Activated CD8-positive, alpha-beta T cell treated with anti-CD3 and anti-CD28 coated beads for 36 hours (primary cell): ENCODE measurements at regions of chr1 and their contacts with region 1.

Region 1: GRCh38 chr1:12124693-12125421 is 41.9 kb upstream of the TNFRSF1B start:
- DNase-seq: peak; percentile 85
- ATAC-seq: peak; percentile 49
- H3K4me3 Mint-ChIP-seq: no peak overlapping the region
- H3K27ac Mint-ChIP-seq: peak overlapping the region; percentile 73
- H3K4me1 Mint-ChIP-seq: peaks cover 60% of the 10 kb centered on the region
- H3K27me3 Mint-ChIP-seq: peaks cover 8% of the 10 kb centered on the region
- CTCF ChIP-seq: peak; percentile 99

Region 2: GRCh38 chr1:11934302-11935056 is 190.4 kb before region 1 on chr1 and contains the start of gene PLOD1:
- CTCF ChIA-PET with region 1: no interaction called
- POLR2A ChIA-PET with region 1: no interaction called
- intact Hi-C with region 1: no loop called
- DNase-seq: peak; percentile 88
- ATAC-seq: peak; percentile 98
- H3K4me3 Mint-ChIP-seq: peak within 1 kb of the TSS; percentile 80
- H3K27ac Mint-ChIP-seq: peak within 1 kb of the TSS; percentile 75
- H3K4me1 Mint-ChIP-seq: peaks cover 2% of the 10 kb centered on the region
- H3K27me3 Mint-ChIP-seq: no peaks in the 10 kb centered on the region
- CTCF ChIP-seq: no peak
- total RNA-seq, gene PLOD1: 21.5 to 22.0 TPM

Region 3: DNA sequence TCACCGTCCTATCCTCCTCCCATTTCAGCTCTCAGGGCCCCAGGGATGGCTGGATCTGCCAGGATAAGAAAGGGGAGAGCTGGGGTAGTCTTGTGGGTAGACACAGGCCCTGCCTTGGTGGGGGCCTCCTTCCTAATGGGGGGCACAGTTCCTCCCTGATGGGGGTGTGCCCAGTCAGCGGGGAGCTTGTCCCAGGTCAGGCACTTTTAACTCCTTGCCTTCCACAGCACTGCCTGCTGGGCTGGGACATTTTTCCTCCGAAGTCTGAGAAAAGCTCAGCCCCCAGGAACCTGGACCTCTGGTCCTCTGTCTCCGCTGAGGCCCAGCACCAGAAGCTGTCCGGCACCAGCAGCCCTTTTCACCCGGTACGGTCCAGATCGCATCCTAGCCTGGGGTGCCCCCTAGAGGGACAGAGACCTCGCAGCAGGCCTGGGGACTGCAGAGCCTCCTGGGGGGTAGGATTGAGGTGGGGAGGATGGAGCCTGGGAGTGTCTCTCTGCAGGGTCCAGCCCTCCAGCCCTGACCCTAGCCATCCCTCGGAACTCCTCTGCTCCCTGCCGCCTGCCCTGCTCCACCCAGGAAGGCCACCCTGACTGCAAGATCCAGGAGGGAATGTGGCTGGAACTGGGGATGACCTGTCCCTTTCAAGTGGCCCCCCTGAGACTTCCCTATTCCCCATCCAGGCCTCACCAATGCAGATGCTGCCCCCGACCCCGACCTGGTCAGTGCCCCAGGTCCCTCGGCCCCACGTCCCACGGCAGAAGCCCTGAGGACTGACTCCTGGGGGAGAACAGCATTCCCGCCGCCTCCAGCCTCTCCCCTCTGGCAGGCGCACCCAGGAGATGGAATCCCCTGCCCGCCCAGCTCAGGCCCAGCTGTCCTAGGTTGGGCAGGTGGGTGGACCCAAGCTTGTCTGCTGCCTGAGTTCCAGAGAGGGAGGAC is 93.5 kb before region 1 on chr1:
- CTCF ChIA-PET with region 1: no interaction called
- POLR2A ChIA-PET with region 1: no interaction called
- intact Hi-C with region 1: no loop called
- DNase-seq: peak; percentile 67
- ATAC-seq: peak; percentile 96
- H3K4me3 Mint-ChIP-seq: no peak overlapping the region
- H3K27ac Mint-ChIP-seq: no peak overlapping the region
- H3K4me1 Mint-ChIP-seq: no peaks in the 10 kb centered on the region
- H3K27me3 Mint-ChIP-seq: no peaks in the 10 kb centered on the region
- CTCF ChIP-seq: peak; percentile 69

Region 4: GRCh38 chr1:12087797-12088314 is 37.0 kb before region 1 on chr1:
- CTCF ChIA-PET with region 1: interaction called, 12 read pairs
- POLR2A ChIA-PET with region 1: no interaction called
- intact Hi-C with region 1: no loop called
- DNase-seq: peak; percentile 88
- ATAC-seq: peak; percentile 78
- H3K4me3 Mint-ChIP-seq: peak overlapping the region; percentile 25
- H3K27ac Mint-ChIP-seq: peak overlapping the region; percentile 90
- H3K4me1 Mint-ChIP-seq: peaks cover 37% of the 10 kb centered on the region
- H3K27me3 Mint-ChIP-seq: no peaks in the 10 kb centered on the region
- CTCF ChIP-seq: no peak

Region 5: DNA sequence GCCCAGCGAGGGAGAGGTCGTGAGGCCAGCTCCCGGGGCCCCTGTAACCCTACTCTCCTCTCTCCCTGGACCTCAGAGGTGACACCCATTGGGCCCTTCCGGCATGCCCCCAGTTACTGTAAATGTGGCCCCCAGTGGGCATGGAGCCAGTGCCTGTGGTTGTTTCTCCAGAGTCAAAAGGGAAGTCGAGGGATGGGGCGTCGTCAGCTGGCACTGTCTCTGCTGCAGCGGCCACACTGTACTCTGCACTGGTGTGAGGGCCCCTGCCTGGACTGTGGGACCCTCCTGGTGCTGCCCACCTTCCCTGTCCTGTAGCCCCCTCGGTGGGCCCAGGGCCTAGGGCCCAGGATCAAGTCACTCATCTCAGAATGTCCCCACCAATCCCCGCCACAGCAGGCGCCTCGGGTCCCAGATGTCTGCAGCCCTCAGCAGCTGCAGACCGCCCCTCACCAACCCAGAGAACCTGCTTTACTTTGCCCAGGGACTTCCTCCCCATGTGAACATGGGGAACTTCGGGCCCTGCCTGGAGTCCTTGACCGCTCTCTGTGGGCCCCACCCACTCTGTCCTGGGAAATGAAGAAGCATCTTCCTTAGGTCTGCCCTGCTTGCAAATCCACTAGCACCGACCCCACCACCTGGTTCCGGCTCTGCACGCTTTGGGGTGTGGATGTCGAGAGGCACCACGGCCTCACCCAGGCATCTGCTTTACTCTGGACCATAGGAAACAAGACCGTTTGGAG is 18.2 kb after region 1 on chr1:
- CTCF ChIA-PET with region 1: interaction called, 38 read pairs
- POLR2A ChIA-PET with region 1: interaction called, 4 read pairs
- intact Hi-C with region 1: no loop called
- DNase-seq: no peak
- ATAC-seq: no peak
- H3K4me3 Mint-ChIP-seq: no peak overlapping the region
- H3K27ac Mint-ChIP-seq: peak overlapping the region; percentile 62
- H3K4me1 Mint-ChIP-seq: peaks cover 43% of the 10 kb centered on the region
- H3K27me3 Mint-ChIP-seq: no peaks in the 10 kb centered on the region
- CTCF ChIP-seq: no peak

Region 6: DNA sequence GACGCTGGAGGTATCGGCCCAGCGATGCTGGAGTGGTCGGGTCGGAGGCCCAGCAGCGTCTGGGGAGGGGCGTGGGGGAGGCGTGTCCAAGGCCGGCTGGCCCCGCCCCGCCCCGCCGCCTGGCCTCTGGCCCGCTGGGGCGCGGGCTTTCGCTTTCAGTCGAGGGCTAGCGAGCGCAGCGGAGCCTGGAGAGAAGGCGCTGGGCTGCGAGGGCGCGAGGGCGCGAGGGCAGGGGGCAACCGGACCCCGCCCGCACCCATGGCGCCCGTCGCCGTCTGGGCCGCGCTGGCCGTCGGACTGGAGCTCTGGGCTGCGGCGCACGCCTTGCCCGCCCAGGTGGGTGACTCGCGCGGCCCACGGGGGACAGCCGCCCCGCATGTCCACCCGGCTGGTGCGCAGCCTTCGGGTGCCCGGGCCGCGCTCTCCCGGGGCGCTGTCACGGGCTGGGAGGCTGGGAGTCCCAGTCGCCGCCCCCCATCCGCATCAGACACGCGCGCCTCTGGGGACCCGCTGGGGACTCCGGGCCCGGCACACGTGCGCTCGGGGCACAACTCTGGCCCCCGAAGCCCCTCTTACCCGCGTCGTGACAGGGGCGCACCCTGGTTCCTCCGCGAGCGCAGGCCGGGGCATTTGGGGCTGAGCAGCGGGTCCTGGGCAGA is 42.1 kb after region 1 on chr1 and contains the start of gene TNFRSF1B:
- CTCF ChIA-PET with region 1: interaction called, 30 read pairs
- POLR2A ChIA-PET with region 1: interaction called, 7 read pairs
- intact Hi-C with region 1: loop called (anchors 5 kb)
- DNase-seq: peak; percentile 75
- ATAC-seq: peak; percentile 60
- H3K4me3 Mint-ChIP-seq: peak within 1 kb of the TSS; percentile 92
- H3K27ac Mint-ChIP-seq: peak within 1 kb of the TSS; percentile 99
- H3K4me1 Mint-ChIP-seq: peaks cover 64% of the 10 kb centered on the region
- H3K27me3 Mint-ChIP-seq: no peaks in the 10 kb centered on the region
- CTCF ChIP-seq: no peak
- total RNA-seq, gene TNFRSF1B: 173 to 191 TPM

Region 7: DNA sequence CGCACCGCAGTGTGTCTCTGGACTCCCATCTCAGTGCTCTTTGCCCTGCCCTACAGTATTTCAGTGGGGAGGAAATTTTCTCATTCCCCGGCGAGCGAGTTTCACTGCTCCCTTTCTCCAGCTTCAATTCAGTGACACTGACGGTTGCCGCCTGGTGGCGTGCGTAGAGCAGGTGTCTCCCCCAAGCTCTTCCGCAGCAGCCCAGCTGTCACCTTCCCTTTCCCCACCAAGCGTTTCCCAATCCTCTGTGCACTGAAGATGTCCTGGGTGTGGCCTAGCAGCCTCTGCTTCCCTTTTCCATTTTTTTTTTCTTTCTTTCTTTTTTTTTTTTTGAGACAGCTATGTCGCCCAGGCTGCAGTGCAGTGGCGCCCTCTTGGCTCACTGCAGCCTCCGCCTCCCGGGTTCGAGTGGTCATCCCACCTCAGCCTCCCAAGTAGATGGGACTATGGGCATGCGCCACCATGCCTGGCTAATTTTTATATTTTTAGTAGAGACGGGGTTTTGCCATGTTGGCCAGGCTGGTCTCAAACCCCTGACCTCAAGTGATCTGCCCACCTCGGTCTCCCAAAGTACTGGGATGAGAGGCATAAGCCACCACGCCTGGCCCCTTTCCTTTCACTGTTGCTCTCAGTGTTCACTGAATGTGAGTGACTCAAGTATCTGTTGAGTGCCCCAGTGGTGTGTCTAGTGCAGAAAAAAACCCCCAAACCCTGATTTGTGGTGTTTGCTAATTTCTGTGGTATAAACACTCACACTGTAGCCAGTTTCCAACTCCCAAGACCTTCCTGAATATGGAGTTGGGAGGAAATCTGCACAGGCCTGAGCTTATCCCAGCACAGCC is 72.0 kb after region 1 on chr1:
- CTCF ChIA-PET with region 1: interaction called, 395 read pairs
- POLR2A ChIA-PET with region 1: interaction called, 8 read pairs
- intact Hi-C with region 1: no loop called
- DNase-seq: no peak
- ATAC-seq: peak; percentile 15
- H3K4me3 Mint-ChIP-seq: no peak overlapping the region
- H3K27ac Mint-ChIP-seq: no peak overlapping the region
- H3K4me1 Mint-ChIP-seq: peaks cover 67% of the 10 kb centered on the region
- H3K27me3 Mint-ChIP-seq: no peaks in the 10 kb centered on the region
- CTCF ChIP-seq: no peak

Region 8: DNA sequence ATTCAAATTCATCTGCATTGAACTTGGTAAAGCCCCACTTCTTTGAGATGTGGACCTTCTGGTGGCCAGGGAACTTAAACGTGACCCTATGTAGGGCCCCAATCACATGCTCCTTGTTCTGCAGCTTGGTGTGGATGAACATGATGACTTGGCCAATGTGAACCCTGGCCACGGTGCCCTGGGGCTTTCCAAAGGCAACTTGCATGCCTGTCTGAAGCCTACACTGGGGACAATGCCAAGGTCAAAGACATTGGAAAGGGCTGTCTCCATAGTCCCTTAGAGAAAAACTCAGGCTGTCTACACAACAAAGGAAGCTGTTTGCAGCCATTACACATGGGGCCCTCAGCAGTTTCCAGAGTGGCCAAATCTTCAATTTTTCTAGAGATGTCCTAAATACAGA is 96.0 kb after region 1 on chr1:
- CTCF ChIA-PET with region 1: interaction called, 49 read pairs
- POLR2A ChIA-PET with region 1: interaction called, 9 read pairs
- intact Hi-C with region 1: no loop called
- DNase-seq: no peak
- ATAC-seq: no peak
- H3K4me3 Mint-ChIP-seq: no peak overlapping the region
- H3K27ac Mint-ChIP-seq: no peak overlapping the region
- H3K4me1 Mint-ChIP-seq: no peaks in the 10 kb centered on the region
- H3K27me3 Mint-ChIP-seq: no peaks in the 10 kb centered on the region
- CTCF ChIP-seq: no peak

Region 9: DNA sequence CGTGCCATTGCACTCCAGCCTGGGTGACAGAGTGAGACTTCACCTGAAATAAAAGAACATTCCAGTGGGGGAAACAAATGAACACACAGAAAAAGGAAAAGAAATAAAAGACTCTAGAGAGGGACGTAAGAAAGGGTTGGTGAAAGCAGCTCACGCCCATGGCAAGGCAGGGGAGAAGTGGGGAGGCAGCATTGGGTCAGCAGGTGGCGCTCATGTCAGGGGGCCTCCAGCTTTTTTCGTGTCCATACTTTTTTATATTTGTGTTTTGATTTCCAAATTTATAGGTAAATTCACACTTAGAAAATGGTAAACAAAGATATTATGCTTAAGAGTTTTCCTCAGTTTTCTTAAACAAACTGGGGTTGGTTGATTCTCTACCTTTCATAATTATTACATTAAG is 150.5 kb after region 1 on chr1:
- CTCF ChIA-PET with region 1: interaction called, 40 read pairs
- POLR2A ChIA-PET with region 1: no interaction called
- intact Hi-C with region 1: no loop called
- DNase-seq: peak; percentile 63
- ATAC-seq: no peak
- H3K4me3 Mint-ChIP-seq: no peak overlapping the region
- H3K27ac Mint-ChIP-seq: no peak overlapping the region
- H3K4me1 Mint-ChIP-seq: no peaks in the 10 kb centered on the region
- H3K27me3 Mint-ChIP-seq: no peaks in the 10 kb centered on the region
- CTCF ChIP-seq: peak; percentile 74